ENCODE measurements at regions of chr1 and their contacts with region 1.

Region 1: DNA sequence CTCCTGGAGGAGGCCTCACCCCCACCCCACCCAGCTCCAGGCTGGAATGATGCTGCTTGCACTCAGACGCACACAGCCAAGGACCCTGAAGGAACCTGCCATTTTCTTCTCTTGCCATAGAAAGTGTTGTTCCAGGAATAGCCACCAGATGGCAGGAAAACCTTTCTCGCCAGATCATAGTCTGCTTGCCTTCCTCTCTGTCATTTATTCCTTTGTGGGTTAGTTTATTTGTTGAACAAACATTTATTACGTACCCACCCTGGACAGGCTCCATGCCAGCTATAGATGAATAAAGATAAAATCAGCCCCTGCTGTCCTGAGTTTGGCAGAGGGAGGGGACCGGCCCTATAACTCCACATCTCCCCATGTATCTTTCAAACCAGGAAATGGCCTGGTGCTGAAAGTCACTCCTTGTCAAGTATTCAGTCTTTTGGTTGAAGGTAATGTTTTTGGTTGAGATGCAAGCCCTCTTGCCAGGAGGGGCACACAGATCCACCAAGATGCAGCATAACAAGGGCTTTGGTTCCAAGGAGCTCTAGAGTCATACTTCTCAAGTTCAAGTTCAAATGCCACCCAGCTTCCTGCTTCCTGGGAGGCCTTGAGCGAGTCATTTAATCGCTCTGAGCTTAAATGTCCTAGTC is 7.0 kb upstream of the KCNC4 start:
- DNase-seq: peak; percentile 55 to 83
- H3K4me3 ChIP-seq: no peak overlapping the region
- H3K27ac ChIP-seq: peak overlapping the region; percentile 19
- H3K4me1 ChIP-seq: peaks cover 35% of the 10 kb centered on the region
- H3K27me3 ChIP-seq: no peaks in the 10 kb centered on the region
- CTCF ChIP-seq: peak; percentile 99

Region 2: DNA sequence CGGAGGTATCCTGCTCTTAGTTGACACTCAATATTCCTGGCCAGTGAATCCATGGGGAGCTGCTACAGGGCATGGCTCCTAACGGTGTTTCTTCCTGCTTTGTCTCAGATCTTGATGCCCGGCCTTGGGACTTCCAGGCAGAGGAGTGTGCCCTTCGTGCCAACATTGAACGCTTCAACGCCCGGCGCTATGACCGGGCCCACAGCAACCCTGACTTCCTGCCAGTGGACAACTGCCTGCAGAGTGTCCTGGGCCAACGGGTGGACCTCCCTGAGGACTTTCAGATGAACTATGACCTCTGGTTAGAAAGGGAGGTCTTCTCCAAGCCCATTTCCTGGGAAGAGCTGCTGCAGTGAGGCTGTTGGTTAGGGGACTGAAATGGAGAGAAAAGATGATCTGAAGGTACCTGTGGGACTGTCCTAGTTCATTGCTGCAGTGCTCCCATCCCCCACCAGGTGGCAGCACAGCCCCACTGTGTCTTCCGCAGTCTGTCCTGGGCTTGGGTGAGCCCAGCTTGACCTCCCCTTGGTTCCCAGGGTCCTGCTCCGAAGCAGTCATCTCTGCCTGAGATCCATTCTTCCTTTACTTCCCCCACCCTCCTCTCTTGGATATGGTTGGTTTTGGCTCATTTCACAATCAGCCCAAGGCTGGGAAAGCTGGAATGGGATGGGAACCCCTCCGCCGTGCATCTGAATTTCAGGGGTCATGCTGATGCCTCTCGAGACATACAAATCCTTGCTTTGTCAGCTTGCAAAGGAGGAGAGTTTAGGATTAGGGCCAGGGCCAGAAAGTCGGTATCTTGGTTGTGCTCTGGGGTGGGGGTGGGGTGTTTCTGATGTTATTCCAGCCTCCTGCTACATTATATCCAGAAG is 149.3 kb before region 1 on chr1:
- CTCF ChIA-PET with region 1: no interaction called
- POLR2A ChIA-PET with region 1: no interaction called
- intact Hi-C with region 1: loop called (anchors 5 kb)
- DNase-seq: peak in 1 of 2 experiments; percentile 58
- H3K4me3 ChIP-seq: no peak overlapping the region
- H3K27ac ChIP-seq: no peak overlapping the region
- H3K4me1 ChIP-seq: peaks cover 16% of the 10 kb centered on the region; the same call in 1 of the 2 replicates
- H3K27me3 ChIP-seq: no peaks in the 10 kb centered on the region
- CTCF ChIP-seq: peak; percentile 99

Region 3: GRCh38 chr1:110407260-110408210 is 204.4 kb after region 1 on chr1 and contains the start of gene LAMTOR5:
- CTCF ChIA-PET with region 1: interaction called, 21 read pairs
- POLR2A ChIA-PET with region 1: no interaction called
- intact Hi-C with region 1: loop called (anchors 5 kb)
- DNase-seq: peak; percentile 93
- H3K4me3 ChIP-seq: peak within 1 kb of the TSS; percentile 84
- H3K27ac ChIP-seq: peak within 1 kb of the TSS; percentile 60
- H3K4me1 ChIP-seq: peaks cover 22% of the 10 kb centered on the region
- H3K27me3 ChIP-seq: no peaks in the 10 kb centered on the region
- CTCF ChIP-seq: peak; percentile 40; the same call in 1 of the 2 replicates
- total RNA-seq, gene LAMTOR5: 140 and 160 TPM in 2 replicates

Region 4: DNA sequence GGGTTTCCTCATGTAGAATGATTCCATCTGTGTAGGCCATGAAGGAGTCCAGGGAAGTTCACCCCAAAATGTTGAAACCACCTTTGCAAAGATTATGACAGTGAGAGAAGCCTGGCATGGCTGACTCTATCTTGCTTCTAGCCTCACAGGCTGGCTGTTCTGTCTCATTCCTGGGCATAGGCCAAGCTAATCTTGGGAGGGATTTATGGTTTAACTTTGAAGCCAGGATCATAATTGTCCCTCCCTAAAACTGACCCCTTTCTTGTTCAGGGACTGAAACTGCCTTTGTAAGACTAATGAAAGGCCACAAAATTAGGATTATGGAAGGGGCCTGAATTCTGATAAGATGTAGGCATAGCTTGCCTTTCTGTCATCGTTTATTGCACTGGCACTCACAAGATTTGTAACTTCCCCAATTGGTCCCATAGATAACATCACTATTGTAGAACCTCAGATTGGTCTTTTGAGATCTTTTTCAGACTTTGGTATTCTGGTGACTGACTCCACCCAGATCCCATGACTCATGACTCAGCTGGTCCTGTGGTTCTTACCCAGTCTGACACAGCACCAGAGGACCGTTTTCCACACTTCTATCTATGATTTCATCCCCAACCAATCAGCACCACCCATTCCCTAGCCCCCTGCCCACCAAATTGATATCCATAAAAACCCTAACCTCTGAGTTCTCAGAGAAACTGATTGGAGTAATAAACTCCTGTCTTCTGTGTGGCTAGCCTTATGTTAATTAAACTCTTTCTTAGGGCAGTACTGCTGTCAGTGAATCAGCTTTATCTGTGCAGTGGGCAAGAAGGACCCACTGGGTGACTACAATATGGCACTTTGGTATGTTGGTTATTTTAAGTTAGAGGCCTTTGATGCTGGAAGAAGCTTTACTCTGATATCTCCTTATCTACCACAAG is 218.0 kb after region 1 on chr1:
- CTCF ChIA-PET with region 1: interaction called, 13 read pairs
- POLR2A ChIA-PET with region 1: no interaction called
- intact Hi-C with region 1: no loop called
- DNase-seq: no peak
- H3K4me3 ChIP-seq: no peak overlapping the region
- H3K27ac ChIP-seq: no peak overlapping the region
- H3K4me1 ChIP-seq: no peaks in the 10 kb centered on the region
- H3K27me3 ChIP-seq: no peaks in the 10 kb centered on the region
- CTCF ChIP-seq: no peak

Region 5: DNA sequence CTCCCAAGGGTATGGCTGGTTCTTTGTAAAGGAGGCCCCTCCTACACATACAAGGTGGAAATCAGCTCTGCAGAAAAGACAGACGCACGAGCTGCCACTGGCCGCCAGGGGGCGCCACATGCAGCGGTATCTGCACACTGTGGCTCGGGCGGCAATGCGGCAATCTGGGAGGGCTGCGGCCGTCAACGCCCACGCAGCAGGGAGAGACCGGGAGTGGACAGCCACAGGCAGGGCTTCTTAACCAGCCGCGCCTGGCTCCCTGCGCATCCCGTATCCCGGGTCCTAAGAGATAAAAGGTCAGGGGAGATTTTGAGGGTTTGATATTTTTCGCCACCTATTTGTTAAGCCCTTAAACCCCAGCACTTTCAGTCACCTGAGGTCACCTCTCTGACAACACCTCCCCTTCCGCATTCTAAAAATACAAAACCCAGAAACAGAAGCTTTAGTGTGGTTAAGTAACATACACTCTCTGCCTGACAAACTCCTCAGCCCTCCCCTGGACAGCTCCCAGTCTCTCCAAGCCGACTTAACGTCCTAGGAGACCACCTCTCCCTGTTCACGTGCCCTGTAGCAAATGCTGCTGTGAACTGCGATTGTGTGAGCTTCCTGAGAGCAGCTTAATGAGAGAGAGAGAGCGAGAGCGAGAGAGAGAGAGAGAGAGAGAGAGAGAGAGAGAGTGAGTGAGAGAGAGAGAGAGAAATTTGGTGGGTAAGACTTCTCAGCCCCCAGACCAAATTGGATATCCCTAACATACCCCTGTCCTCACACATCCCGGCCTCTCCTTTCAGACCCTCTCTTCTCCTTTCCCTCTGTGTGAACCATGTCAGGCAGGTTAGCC is 416.5 kb after region 1 on chr1:
- CTCF ChIA-PET with region 1: no interaction called
- POLR2A ChIA-PET with region 1: no interaction called
- intact Hi-C with region 1: loop called (anchors 2 kb)
- DNase-seq: peak; percentile 60 to 82
- H3K4me3 ChIP-seq: no peak overlapping the region
- H3K27ac ChIP-seq: no peak overlapping the region
- H3K4me1 ChIP-seq: no peaks in the 10 kb centered on the region; the same call in 1 of the 2 replicates
- H3K27me3 ChIP-seq: peaks cover 40% of the 10 kb centered on the region; the same call in 1 of the 2 replicates
- CTCF ChIP-seq: peak; percentile 99

Measured in PC-9 (cell line).